Endothelial cell of umbilical vein (primary cell): ENCODE measurements at regions of chr6 and their contacts with region 1.

Region 1: GRCh38 chr6:142946181-142946923 is 1.4 kb upstream of the HIVEP2 start:
- DNase-seq: peak; percentile 97
- H3K4me3 ChIP-seq: peak overlapping the region; percentile 58 to 91 (median 85)
- H3K27ac ChIP-seq: peak overlapping the region; percentile 85
- H3K4me1 ChIP-seq: peaks cover 17% of the 10 kb centered on the region
- H3K27me3 ChIP-seq: no peaks in the 10 kb centered on the region
- CTCF ChIP-seq: no peak
- POLR2A ChIP-seq: no peak

Region 2: GRCh38 chr6:142395768-142396231 is 550.6 kb before region 1 on chr6:
- CTCF ChIA-PET with region 1: no interaction called
- POLR2A ChIA-PET with region 1: no interaction called
- dilution Hi-C with region 1: no loop called
- intact Hi-C with region 1: loop called (anchors 10 kb)
- DNase-seq: peak; percentile 94
- H3K4me3 ChIP-seq: no peak overlapping the region
- H3K27ac ChIP-seq: peak overlapping the region; percentile 99
- H3K4me1 ChIP-seq: peaks cover 47% of the 10 kb centered on the region
- H3K27me3 ChIP-seq: no peaks in the 10 kb centered on the region
- CTCF ChIP-seq: no peak
- POLR2A ChIP-seq: no peak

Region 3: GRCh38 chr6:142728910-142729481 is 217.4 kb before region 1 on chr6:
- CTCF ChIA-PET with region 1: no interaction called
- POLR2A ChIA-PET with region 1: no interaction called
- dilution Hi-C with region 1: no loop called
- intact Hi-C with region 1: loop called (anchors 1 kb)
- DNase-seq: peak; percentile 95
- H3K4me3 ChIP-seq: peak overlapping the region in 1 of 3 experiments; percentile 25
- H3K27ac ChIP-seq: peak overlapping the region; percentile 16
- H3K4me1 ChIP-seq: peaks cover 19% of the 10 kb centered on the region
- H3K27me3 ChIP-seq: peaks cover 0 to 9% of the 10 kb centered on the region in 2 experiments
- CTCF ChIP-seq: no peak
- POLR2A ChIP-seq: no peak

Region 4: GRCh38 chr6:142827369-142827768 is 119.0 kb before region 1 on chr6:
- CTCF ChIA-PET with region 1: interaction called, 3 read pairs
- POLR2A ChIA-PET with region 1: interaction called, 3 read pairs
- dilution Hi-C with region 1: no loop called
- intact Hi-C with region 1: loop called (anchors 1 kb)
- DNase-seq: peak; percentile 98
- H3K4me3 ChIP-seq: no peak overlapping the region
- H3K27ac ChIP-seq: peak overlapping the region; percentile 59
- H3K4me1 ChIP-seq: peaks cover 15% of the 10 kb centered on the region
- H3K27me3 ChIP-seq: no peaks in the 10 kb centered on the region
- CTCF ChIP-seq: no peak
- POLR2A ChIP-seq: no peak

Region 5: DNA sequence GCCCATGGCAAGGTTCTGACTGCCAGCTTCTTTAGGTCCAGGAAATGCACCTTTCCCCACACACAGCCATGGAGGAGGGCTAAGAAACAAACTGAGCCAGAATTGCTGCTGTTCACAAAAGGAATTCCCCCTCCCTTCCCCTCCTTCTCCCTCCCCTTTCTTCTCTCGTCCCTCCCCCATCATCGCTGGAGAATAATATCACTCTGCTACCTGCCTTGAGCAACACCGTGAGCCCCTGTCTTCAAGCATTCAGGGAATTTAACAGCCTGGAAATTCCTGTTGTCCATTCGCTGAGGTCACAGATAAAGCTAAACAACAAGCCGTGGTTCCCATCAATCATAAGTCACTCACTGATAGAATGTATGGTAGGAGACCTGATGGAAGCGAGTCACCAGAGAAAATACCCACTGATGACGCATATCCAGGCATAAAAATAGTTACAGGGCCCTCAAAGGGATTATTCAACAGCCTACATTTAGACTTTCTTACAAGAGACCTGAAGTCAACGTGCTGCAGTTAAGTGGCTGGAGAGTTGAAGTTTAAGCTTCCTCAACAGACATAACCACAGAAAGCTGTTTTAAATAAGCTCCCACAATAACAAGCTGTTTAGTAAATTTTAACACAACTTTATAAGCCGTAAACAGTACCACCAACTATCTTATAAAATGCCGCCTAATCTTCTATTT is 61.0 kb before region 1 on chr6:
- CTCF ChIA-PET with region 1: interaction called, 5 read pairs
- POLR2A ChIA-PET with region 1: interaction called, 3 read pairs
- dilution Hi-C with region 1: no loop called
- intact Hi-C with region 1: loop called (anchors 1 kb)
- DNase-seq: peak; percentile 98
- H3K4me3 ChIP-seq: peak overlapping the region in 2 of 3 experiments; percentile 1 to 9
- H3K27ac ChIP-seq: peak overlapping the region; percentile 89
- H3K4me1 ChIP-seq: peaks cover 16% of the 10 kb centered on the region
- H3K27me3 ChIP-seq: no peaks in the 10 kb centered on the region
- CTCF ChIP-seq: no peak
- POLR2A ChIP-seq: peak; percentile 49

Region 6: GRCh38 chr6:142987490-142987889 is 41.1 kb after region 1 on chr6:
- CTCF ChIA-PET with region 1: no interaction called
- POLR2A ChIA-PET with region 1: no interaction called
- dilution Hi-C with region 1: no loop called
- intact Hi-C with region 1: no loop called
- DNase-seq: no peak
- H3K4me3 ChIP-seq: no peak overlapping the region
- H3K27ac ChIP-seq: no peak overlapping the region
- H3K4me1 ChIP-seq: no peaks in the 10 kb centered on the region
- H3K27me3 ChIP-seq: peaks cover 2 to 3% of the 10 kb centered on the region in 2 experiments
- CTCF ChIP-seq: no peak
- POLR2A ChIP-seq: no peak

Region 7: DNA sequence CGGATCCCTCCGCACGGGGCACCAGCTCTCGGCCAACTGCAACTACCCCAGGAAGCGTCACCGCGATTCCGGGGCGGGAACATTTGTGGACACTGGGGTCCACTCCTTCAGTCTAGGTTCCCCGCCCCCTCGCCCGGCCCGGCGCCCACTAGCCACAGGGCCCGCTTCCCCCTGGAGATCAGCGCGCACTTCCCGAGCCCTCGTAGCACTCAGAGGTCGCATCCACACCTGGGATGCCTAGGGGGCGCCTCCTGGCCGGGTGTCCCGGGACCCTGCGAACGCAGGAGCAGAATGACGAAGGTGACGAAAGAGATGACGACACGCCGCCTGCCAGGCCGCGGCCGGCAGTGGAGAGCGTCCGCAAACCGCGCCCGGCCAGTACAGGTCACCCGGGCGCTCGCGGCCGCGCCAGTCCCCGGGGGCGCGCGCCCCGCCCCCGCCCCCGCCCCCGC is 114.0 kb after region 1 on chr6:
- CTCF ChIA-PET with region 1: no interaction called
- POLR2A ChIA-PET with region 1: no interaction called
- dilution Hi-C with region 1: no loop called
- intact Hi-C with region 1: loop called (anchors 1 kb)
- DNase-seq: peak; percentile 82
- H3K4me3 ChIP-seq: peak overlapping the region; percentile 35 to 76 (median 67)
- H3K27ac ChIP-seq: peak overlapping the region; percentile 83
- H3K4me1 ChIP-seq: peaks cover 10% of the 10 kb centered on the region
- H3K27me3 ChIP-seq: no peaks in the 10 kb centered on the region
- CTCF ChIP-seq: peak in 1 of 2 donors; percentile 15
- POLR2A ChIP-seq: no peak

Region 8: DNA sequence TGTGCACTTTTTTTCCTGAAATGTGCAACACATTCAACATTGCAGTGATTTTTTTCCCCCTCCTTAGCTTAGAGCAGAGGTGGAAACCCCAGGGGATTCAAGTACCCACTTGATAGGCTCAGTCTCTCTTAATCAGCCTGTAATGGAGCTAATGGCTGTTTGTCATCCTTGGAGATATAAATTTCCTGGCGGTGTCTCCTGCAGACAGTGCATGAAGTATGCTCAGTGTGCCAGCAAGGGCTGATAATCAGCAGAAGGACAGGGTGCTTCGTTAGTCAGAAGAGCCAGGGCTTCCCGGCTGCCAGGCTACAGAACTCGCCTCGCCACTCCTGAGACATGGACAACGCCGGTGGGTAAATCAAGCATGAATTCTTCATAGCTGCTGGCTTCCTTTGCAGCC is 661.6 kb after region 1 on chr6:
- CTCF ChIA-PET with region 1: no interaction called
- POLR2A ChIA-PET with region 1: no interaction called
- dilution Hi-C with region 1: no loop called
- intact Hi-C with region 1: no loop called
- DNase-seq: no peak
- H3K4me3 ChIP-seq: no peak overlapping the region
- H3K27ac ChIP-seq: no peak overlapping the region
- H3K4me1 ChIP-seq: peaks cover 12% of the 10 kb centered on the region
- H3K27me3 ChIP-seq: no peaks in the 10 kb centered on the region
- CTCF ChIP-seq: no peak
- POLR2A ChIP-seq: no peak